Lower leg skin (tissue), 4 donors: ENCODE measurements at regions of chr11 and their contacts with region 1.

Region 1: GRCh38 chr11:60394666-60395380 is 1.4 kb upstream of the MS4A14 start:
- DNase-seq: no peak
- H3K4me3 ChIP-seq: no peak overlapping the region
- CTCF ChIP-seq: no peak
- POLR2A ChIP-seq: no peak

Region 2: DNA sequence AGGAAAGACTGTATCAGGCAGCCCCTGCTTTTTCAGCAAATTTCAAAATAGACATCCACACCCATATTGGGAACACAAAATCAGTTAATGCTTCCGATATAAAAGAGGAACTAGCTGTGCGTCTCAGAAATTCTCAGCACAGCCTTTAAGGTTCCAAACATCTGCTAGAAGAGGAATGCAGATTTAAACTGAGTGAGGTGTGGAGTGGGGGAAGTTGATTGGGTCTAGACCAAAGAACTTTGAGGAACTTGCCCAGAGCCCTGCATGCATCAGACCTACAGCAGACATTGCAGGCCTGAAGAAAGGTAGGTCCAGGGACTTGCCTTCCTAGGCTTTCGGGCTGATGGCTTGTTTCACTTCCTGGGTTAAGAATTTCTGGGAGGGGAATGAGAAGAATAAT is 114.4 kb before region 1 on chr11 and contains the start of gene MS4A4A:
- intact Hi-C with region 1: no loop called
- DNase-seq: peak in 1 of 2 donors; percentile 28
- H3K4me3 ChIP-seq: peak within 1 kb of the TSS; percentile 10
- CTCF ChIP-seq: no peak
- POLR2A ChIP-seq: no peak
- total RNA-seq, gene MS4A4A: 3.0 to 9.5 (median 6.2) TPM

Region 3: DNA sequence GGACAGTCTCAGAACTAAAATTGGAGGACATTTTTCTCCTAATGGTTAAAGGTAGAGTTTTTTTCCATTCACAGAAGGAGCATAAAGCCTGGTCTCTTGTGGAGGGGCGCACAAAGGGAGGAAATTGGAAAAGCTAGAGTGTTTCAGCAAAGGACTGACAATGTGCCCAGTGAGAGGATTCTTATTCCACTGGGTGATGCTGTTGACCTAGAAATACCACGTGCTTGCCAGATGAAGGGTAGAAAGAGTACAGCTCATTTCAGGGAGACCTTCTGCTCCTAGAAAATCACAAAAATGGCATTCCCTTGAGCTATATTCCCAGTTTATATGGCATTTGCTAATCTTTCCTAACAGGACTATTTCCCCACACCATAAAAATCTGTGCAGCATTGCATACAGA is 46.7 kb before region 1 on chr11:
- intact Hi-C with region 1: loop called (anchors 1 kb)
- DNase-seq: no peak
- H3K4me3 ChIP-seq: no peak overlapping the region
- CTCF ChIP-seq: no peak
- POLR2A ChIP-seq: no peak

Region 4: GRCh38 chr11:60775420-60775961 is 380.7 kb after region 1 on chr11:
- intact Hi-C with region 1: no loop called
- DNase-seq: peak; percentile 84 to 93
- H3K4me3 ChIP-seq: no peak overlapping the region
- CTCF ChIP-seq: peak in 1 of 3 donors; percentile 21
- POLR2A ChIP-seq: no peak